SK-N-SH (cell line): ENCODE measurements at regions of chr10 and their contacts with region 1.

Region 1: GRCh38 chr10:118241229-118242137 is 100.6 kb downstream of the FAM204A start:
- DNase-seq: peak; percentile 53
- H3K4me3 ChIP-seq: no peak overlapping the region; a peak in 1 of 4 replicates
- H3K27ac ChIP-seq: no peak overlapping the region
- H3K4me1 ChIP-seq: peaks cover 0 to 13% of the 10 kb centered on the region in 2 experiments; a peak in 2 of 4 replicates
- H3K27me3 ChIP-seq: peaks cover 9% of the 10 kb centered on the region; the same call in 1 of the 2 replicates
- CTCF ChIP-seq: peak; percentile 93
- EP300 ChIP-seq: no peak
- RAD21 ChIP-seq: peak; percentile 98

Region 2: GRCh38 chr10:117537436-117537903 is 704.0 kb before region 1 on chr10:
- CTCF ChIA-PET with region 1: interaction called, 116 read pairs
- POLR2A ChIA-PET with region 1: interaction called, 3 read pairs
- DNase-seq: peak; percentile 93
- H3K4me3 ChIP-seq: peak overlapping the region in 1 of 2 experiments; percentile 37; a peak in 1 of 4 replicates
- H3K27ac ChIP-seq: no peak overlapping the region
- H3K4me1 ChIP-seq: peaks cover 0 to 21% of the 10 kb centered on the region in 2 experiments; a peak in 2 of 4 replicates
- H3K27me3 ChIP-seq: peaks cover 89% of the 10 kb centered on the region
- CTCF ChIP-seq: peak; percentile 65
- EP300 ChIP-seq: no peak
- RAD21 ChIP-seq: peak; percentile 72

Region 3: GRCh38 chr10:117545141-117546019 is 696.1 kb before region 1 on chr10:
- CTCF ChIA-PET with region 1: interaction called, 116 read pairs
- POLR2A ChIA-PET with region 1: no interaction called
- DNase-seq: no peak
- H3K4me3 ChIP-seq: peak overlapping the region; percentile 0 to 16; a peak in 2 of 4 replicates
- H3K27ac ChIP-seq: no peak overlapping the region
- H3K4me1 ChIP-seq: peaks cover 0 to 10% of the 10 kb centered on the region in 2 experiments; a peak in 2 of 4 replicates
- H3K27me3 ChIP-seq: peaks cover 100% of the 10 kb centered on the region
- CTCF ChIP-seq: no peak
- EP300 ChIP-seq: no peak
- RAD21 ChIP-seq: no peak

Region 4: DNA sequence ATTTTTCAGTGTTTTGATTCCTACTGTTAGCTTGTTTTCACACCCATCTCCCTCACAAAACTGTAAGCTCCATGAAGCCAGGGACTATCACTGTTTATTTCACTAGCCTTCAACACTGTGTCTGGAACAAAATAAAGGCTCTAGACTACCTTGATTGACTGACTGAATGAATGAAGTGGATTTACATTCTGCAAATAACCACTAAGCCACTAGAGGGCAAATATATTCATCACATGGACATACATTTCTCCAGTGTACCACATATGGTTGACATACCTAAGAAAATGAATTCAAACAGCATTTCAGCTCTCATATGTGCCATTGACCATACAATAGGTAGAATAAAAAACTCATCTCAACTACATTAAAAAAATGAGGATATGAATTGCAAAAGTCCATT is 380.7 kb before region 1 on chr10:
- CTCF ChIA-PET with region 1: interaction called, 14 read pairs
- POLR2A ChIA-PET with region 1: no interaction called
- DNase-seq: peak; percentile 34
- H3K4me3 ChIP-seq: peak overlapping the region in 1 of 2 experiments; percentile 27; a peak in 1 of 4 replicates
- H3K27ac ChIP-seq: no peak overlapping the region
- H3K4me1 ChIP-seq: no peaks in the 10 kb centered on the region
- H3K27me3 ChIP-seq: no peaks in the 10 kb centered on the region
- CTCF ChIP-seq: peak; percentile 27
- EP300 ChIP-seq: no peak
- RAD21 ChIP-seq: peak; percentile 52

Region 5: GRCh38 chr10:118034791-118035261 is 206.7 kb before region 1 on chr10:
- CTCF ChIA-PET with region 1: interaction called, 18 read pairs
- POLR2A ChIA-PET with region 1: no interaction called
- DNase-seq: no peak
- H3K4me3 ChIP-seq: no peak overlapping the region
- H3K27ac ChIP-seq: no peak overlapping the region; a peak in 1 of 4 replicates
- H3K4me1 ChIP-seq: peaks cover 10 to 13% of the 10 kb centered on the region in 2 experiments; a peak in 3 of 4 replicates
- H3K27me3 ChIP-seq: no peaks in the 10 kb centered on the region
- CTCF ChIP-seq: no peak
- EP300 ChIP-seq: no peak
- RAD21 ChIP-seq: no peak

Region 6: DNA sequence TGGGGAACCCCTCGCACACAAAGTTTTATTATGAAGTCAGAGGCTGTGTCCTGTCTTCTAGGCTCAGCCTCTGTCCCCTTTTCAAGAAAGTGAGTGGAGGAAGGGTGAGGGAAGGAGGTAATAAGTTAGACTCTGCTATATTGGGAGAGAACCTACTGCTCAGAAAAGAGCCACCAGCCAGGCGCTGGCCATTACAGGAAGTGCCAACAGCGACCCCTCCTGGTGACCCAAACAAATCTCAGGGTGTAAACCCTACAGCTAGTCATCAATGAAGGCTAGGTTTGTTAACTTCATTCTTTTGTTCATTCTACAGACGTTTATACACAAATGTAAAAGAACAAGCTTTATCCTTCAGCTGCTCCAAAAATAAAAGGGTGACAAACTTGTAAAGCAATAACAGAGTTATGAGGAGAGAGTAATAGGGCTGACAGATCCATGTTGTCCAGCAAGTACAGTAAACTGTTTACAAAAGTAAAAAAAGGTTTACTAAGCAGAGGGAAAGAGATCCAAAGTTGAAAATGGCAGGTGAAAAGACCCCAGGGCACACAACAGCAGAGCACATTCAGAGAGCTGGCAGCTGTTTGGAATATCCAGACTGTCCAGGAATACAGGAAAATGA is 17.9 kb after region 1 on chr10:
- CTCF ChIA-PET with region 1: interaction called, 37 read pairs
- POLR2A ChIA-PET with region 1: interaction called, 4 read pairs
- DNase-seq: peak; percentile 47
- H3K4me3 ChIP-seq: peak overlapping the region in 1 of 2 experiments; percentile 36; a peak in 1 of 4 replicates
- H3K27ac ChIP-seq: no peak overlapping the region
- H3K4me1 ChIP-seq: peaks cover 0 to 22% of the 10 kb centered on the region in 2 experiments; a peak in 2 of 4 replicates
- H3K27me3 ChIP-seq: no peaks in the 10 kb centered on the region; the same call in 1 of the 2 replicates
- CTCF ChIP-seq: peak; percentile 66
- EP300 ChIP-seq: no peak
- RAD21 ChIP-seq: peak; percentile 66

Region 7: DNA sequence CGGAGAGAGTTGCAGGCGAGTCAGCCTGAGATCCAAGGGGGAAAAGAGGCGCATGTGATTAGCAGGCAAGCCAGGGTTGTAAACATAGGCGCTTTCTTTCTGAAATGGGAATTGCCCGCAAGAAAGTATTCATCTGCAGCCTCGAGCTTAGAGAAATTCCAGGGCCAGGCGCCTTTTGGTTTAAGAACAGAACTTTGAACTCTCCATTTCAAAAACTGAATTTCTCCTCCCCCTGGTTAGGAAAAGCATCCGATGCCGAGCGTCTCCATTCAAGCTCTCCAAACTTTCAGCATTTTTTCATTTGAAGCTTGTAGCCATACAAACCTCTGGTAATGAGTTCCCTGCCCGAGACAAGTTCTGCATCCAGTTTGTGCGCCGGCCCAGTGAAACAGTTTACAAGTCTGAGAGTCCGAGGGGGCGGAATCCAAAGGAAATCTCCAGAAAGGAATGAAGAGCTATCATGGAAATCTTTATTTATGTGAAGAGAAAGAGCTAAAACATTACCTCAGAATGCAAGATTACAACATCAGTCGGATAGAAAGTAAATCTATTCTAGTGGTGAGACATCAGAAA is 30.8 kb after region 1 on chr10:
- CTCF ChIA-PET with region 1: no interaction called
- POLR2A ChIA-PET with region 1: no interaction called
- DNase-seq: no peak
- H3K4me3 ChIP-seq: no peak overlapping the region
- H3K27ac ChIP-seq: no peak overlapping the region
- H3K4me1 ChIP-seq: peaks cover 0 to 10% of the 10 kb centered on the region in 2 experiments; a peak in 1 of 4 replicates
- H3K27me3 ChIP-seq: no peaks in the 10 kb centered on the region; the same call in 1 of the 2 replicates
- CTCF ChIP-seq: no peak
- EP300 ChIP-seq: no peak
- RAD21 ChIP-seq: no peak